CD4-positive, alpha-beta T cell (primary cell): ENCODE measurements at regions of chr1 and their contacts with region 1.

Region 1: DNA sequence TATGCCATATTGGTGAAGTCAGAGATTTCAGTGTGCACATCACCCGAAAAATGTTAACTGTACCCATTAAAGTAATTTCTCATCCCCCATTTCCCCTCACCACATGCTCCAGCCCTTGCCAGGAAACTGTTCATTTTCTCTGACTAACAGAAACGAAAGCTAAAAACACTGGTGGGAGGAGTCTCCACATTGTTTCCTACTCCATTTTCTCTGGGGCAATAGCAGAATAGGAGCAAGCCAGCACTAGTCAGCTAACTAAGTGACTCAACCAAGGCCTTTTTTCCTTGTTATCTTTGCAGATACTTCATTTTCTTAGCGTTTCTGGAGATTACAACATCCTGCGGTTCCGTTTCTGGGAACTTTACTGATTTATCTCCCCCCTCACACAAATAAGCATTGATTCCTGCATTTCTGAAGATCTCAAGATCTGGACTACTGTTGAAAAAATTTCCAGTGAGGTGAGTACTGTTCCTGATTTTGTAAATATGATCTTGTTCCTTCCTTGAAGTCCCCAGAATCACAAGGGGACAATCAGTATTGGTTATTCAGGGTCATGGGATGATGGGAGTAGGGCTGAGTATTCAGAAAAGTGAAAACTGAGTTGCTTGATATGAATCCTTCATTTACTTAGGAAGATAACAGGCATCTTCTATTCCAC is at the start of gene IFI16:
- DNase-seq: peak in 11 of 14 experiments; percentile 22 to 92 (median 55)
- ATAC-seq: peak; percentile 81
- H3K4me3 ChIP-seq: peak within 1 kb of the TSS; percentile 69
- H3K4me3 Mint-ChIP-seq: peak within 1 kb of the TSS; percentile 98
- H3K27ac ChIP-seq: peak within 1 kb of the TSS; percentile 72 to 92
- H3K27ac Mint-ChIP-seq: peak within 1 kb of the TSS; percentile 96
- H3K4me1 ChIP-seq: peaks cover 28% of the 10 kb centered on the region
- H3K4me1 Mint-ChIP-seq: peaks cover 66% of the 10 kb centered on the region
- H3K27me3 ChIP-seq: no peaks in the 10 kb centered on the region
- H3K27me3 Mint-ChIP-seq: no peaks in the 10 kb centered on the region
- CTCF ChIP-seq: no peak
- total RNA-seq, gene IFI16: 36.9 to 37.6 TPM

Region 2: GRCh38 chr1:158931055-158931737 is 78.6 kb before region 1 on chr1 and contains the start of gene PYHIN1:
- CTCF ChIA-PET with region 1: no interaction called
- POLR2A ChIA-PET with region 1: interaction called, 10 read pairs
- intact Hi-C with region 1: no loop called
- DNase-seq: peak in 8 of 14 experiments; percentile 7 to 85 (median 45)
- ATAC-seq: peak; percentile 81
- H3K4me3 ChIP-seq: peak within 1 kb of the TSS; percentile 67
- H3K4me3 Mint-ChIP-seq: peak within 1 kb of the TSS; percentile 97
- H3K27ac ChIP-seq: peak within 1 kb of the TSS; percentile 63 to 74
- H3K27ac Mint-ChIP-seq: peak within 1 kb of the TSS; percentile 84
- H3K4me1 ChIP-seq: peaks cover 19% of the 10 kb centered on the region
- H3K4me1 Mint-ChIP-seq: peaks cover 32% of the 10 kb centered on the region
- H3K27me3 ChIP-seq: no peaks in the 10 kb centered on the region
- H3K27me3 Mint-ChIP-seq: no peaks in the 10 kb centered on the region
- CTCF ChIP-seq: no peak
- total RNA-seq, gene PYHIN1: 15.2 to 16.2 TPM

Region 3: GRCh38 chr1:159483501-159483900 is 473.7 kb after region 1 on chr1:
- CTCF ChIA-PET with region 1: no interaction called
- POLR2A ChIA-PET with region 1: no interaction called
- intact Hi-C with region 1: no loop called
- DNase-seq: no peak
- ATAC-seq: no peak
- H3K4me3 ChIP-seq: no peak overlapping the region
- H3K4me3 Mint-ChIP-seq: no peak overlapping the region
- H3K27ac ChIP-seq: no peak overlapping the region
- H3K27ac Mint-ChIP-seq: no peak overlapping the region
- H3K4me1 ChIP-seq: no peaks in the 10 kb centered on the region
- H3K4me1 Mint-ChIP-seq: no peaks in the 10 kb centered on the region
- H3K27me3 ChIP-seq: no peaks in the 10 kb centered on the region
- H3K27me3 Mint-ChIP-seq: peaks cover 6% of the 10 kb centered on the region
- CTCF ChIP-seq: no peak

Region 4: GRCh38 chr1:159612211-159612885 is 602.5 kb after region 1 on chr1:
- CTCF ChIA-PET with region 1: no interaction called
- POLR2A ChIA-PET with region 1: no interaction called
- intact Hi-C with region 1: no loop called
- DNase-seq: no peak
- ATAC-seq: no peak
- H3K4me3 ChIP-seq: no peak overlapping the region
- H3K4me3 Mint-ChIP-seq: no peak overlapping the region
- H3K27ac ChIP-seq: no peak overlapping the region
- H3K27ac Mint-ChIP-seq: no peak overlapping the region
- H3K4me1 ChIP-seq: no peaks in the 10 kb centered on the region
- H3K4me1 Mint-ChIP-seq: no peaks in the 10 kb centered on the region
- H3K27me3 ChIP-seq: peaks cover 0 to 9% of the 10 kb centered on the region in 2 experiments
- H3K27me3 Mint-ChIP-seq: peaks cover 42% of the 10 kb centered on the region
- CTCF ChIP-seq: no peak